ENCODE measurements at regions of chr9 and their contacts with region 1.

Region 1: DNA sequence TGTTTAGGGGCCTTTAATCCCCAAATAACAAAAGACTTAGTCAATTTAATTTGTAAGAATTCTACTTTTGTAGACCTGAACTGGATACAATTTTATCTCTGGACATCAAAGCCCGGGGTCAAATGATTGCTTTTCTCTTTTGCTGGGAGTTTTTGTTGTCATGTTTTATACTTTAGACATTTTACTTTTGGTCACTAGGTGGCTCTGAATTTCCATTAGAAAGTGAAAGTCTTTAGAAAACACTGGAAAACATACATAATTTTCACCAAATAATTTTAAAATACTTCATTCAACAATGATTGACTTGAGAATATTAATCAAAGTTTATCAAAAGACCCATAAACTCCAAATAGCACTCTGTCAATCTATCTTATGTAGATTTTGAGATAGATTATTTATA is 2.8 kb upstream of the PCA3 start:
- DNase-seq: no peak
- H3K4me3 ChIP-seq: no peak overlapping the region
- H3K27ac ChIP-seq: no peak overlapping the region
- H3K4me1 ChIP-seq: no peaks in the 10 kb centered on the region
- H3K27me3 ChIP-seq: no peaks in the 10 kb centered on the region
- CTCF ChIP-seq: no peak
- EP300 ChIP-seq: no peak
- POLR2A ChIP-seq: no peak

Region 2: GRCh38 chr9:77142366-77142765 is 380.9 kb after region 1 on chr9:
- intact Hi-C with region 1: loop called in 1 of 4 experiments (anchors 10 kb)
- DNase-seq: no peak
- H3K4me3 ChIP-seq: no peak overlapping the region
- H3K27ac ChIP-seq: no peak overlapping the region
- H3K4me1 ChIP-seq: no peaks in the 10 kb centered on the region
- H3K27me3 ChIP-seq: no peaks in the 10 kb centered on the region
- CTCF ChIP-seq: no peak
- EP300 ChIP-seq: no peak
- POLR2A ChIP-seq: no peak